Caco-2 (cell line): ENCODE measurements at regions of chr10 and their contacts with region 1.

Region 1: DNA sequence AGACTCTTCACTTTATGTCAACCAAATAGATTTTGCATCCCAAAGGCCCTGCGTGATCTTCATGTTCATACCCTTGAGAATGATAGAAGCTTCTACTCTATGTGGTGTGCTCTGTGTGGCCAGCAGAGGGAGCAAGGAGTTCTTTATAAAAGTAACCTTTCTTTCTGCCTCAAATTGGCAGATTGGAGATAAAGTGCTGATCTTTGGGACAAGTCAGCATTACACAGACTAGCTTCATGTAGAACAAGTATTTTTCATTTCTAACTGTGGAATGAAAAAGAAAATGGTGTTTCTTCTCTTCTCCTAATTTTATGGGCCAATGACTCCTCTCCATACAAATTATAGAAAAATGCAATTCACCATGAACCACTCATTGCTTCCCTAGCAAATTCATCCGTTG is 1214.1 kb downstream of the SORCS1 start:
- DNase-seq: peak; percentile 42 to 44
- H3K4me3 ChIP-seq: no peak overlapping the region
- H3K4me3 Mint-ChIP-seq: no peak overlapping the region
- H3K27ac Mint-ChIP-seq: no peak overlapping the region
- H3K4me1 ChIP-seq: no peaks in the 10 kb centered on the region
- H3K4me1 Mint-ChIP-seq: no peaks in the 10 kb centered on the region
- H3K27me3 ChIP-seq: no peaks in the 10 kb centered on the region
- H3K27me3 Mint-ChIP-seq: no peaks in the 10 kb centered on the region
- CTCF ChIP-seq: peak; percentile 62 to 83

Region 2: GRCh38 chr10:105797234-105797890 is 153.0 kb before region 1 on chr10:
- CTCF ChIA-PET with region 1: no interaction called
- POLR2A ChIA-PET with region 1: no interaction called
- intact Hi-C with region 1: loop called (anchors 1 kb)
- DNase-seq: peak in 1 of 2 experiments; percentile 28
- H3K4me3 ChIP-seq: no peak overlapping the region
- H3K4me3 Mint-ChIP-seq: no peak overlapping the region
- H3K27ac Mint-ChIP-seq: no peak overlapping the region
- H3K4me1 ChIP-seq: no peaks in the 10 kb centered on the region
- H3K4me1 Mint-ChIP-seq: no peaks in the 10 kb centered on the region
- H3K27me3 ChIP-seq: no peaks in the 10 kb centered on the region
- H3K27me3 Mint-ChIP-seq: no peaks in the 10 kb centered on the region
- CTCF ChIP-seq: peak; percentile 51

Region 3: DNA sequence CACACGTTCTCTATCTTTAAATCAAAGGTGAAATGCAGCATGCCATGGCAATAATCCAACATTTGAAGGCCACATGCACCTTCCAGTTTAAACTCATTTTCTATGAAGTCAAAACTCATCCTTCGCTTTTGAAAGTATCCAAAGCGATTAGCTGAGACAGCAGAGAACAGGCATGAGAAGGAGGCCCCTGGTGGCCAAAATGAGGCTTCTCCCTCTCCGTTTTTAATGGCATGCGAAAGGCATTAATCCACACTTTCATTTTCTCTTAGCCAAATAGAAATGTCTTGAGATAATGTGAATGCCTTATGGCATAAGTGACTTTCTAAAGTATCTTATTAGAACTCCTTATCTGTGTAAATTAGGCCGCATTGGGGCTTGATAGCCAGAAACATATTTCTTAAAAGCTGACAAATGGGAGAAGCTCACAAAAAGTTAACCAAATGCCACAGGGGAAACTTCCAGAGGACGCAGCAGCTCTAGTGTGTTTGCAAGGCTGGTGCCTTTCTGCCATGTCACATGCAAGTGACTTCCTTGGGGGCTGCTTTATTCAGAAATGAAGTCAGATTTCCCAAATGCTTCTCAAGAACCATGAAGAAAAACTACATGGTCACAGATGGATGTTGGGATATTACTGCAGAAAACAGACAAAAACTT is 24.5 kb after region 1 on chr10:
- CTCF ChIA-PET with region 1: interaction called, 5 read pairs
- POLR2A ChIA-PET with region 1: no interaction called
- intact Hi-C with region 1: loop called (anchors 2 kb)
- DNase-seq: peak in 1 of 2 experiments; percentile 25
- H3K4me3 ChIP-seq: no peak overlapping the region
- H3K4me3 Mint-ChIP-seq: no peak overlapping the region
- H3K27ac Mint-ChIP-seq: no peak overlapping the region
- H3K4me1 ChIP-seq: no peaks in the 10 kb centered on the region
- H3K4me1 Mint-ChIP-seq: no peaks in the 10 kb centered on the region
- H3K27me3 ChIP-seq: no peaks in the 10 kb centered on the region
- H3K27me3 Mint-ChIP-seq: peaks cover 2% of the 10 kb centered on the region
- CTCF ChIP-seq: peak; percentile 46 to 72

Region 4: GRCh38 chr10:106000721-106001120 is 50.3 kb after region 1 on chr10:
- CTCF ChIA-PET with region 1: no interaction called
- POLR2A ChIA-PET with region 1: no interaction called
- intact Hi-C with region 1: no loop called
- DNase-seq: no peak
- H3K4me3 ChIP-seq: no peak overlapping the region
- H3K4me3 Mint-ChIP-seq: no peak overlapping the region
- H3K27ac Mint-ChIP-seq: no peak overlapping the region
- H3K4me1 ChIP-seq: no peaks in the 10 kb centered on the region
- H3K4me1 Mint-ChIP-seq: no peaks in the 10 kb centered on the region
- H3K27me3 ChIP-seq: no peaks in the 10 kb centered on the region
- H3K27me3 Mint-ChIP-seq: peaks cover 8% of the 10 kb centered on the region
- CTCF ChIP-seq: no peak

Region 5: DNA sequence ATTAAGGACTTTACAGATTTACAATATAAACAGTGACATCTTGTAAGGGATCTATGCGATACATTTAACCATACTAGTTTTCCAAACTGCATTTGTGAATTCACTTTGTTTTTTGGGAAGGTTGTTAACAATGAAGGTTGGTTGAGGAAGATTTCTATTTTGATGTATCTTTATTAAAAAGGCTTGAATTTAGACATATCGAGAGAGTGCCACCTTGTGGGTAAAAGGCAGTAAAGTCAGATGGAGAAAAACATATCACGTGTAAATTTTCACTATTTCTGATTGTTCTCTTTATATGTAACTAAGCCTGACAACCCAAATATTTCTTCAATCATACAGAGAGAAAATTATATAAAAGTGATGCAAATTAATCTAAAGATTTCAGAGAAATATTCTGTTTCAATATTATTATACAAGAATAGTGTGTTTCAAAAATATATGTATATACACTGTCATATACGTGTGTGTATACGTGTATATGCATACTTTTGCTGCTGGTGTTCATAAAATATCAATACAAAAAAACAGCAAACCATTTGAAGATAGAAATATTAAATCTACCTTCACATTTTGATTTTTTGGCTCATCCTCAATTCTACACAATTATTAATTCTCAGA is 225.5 kb after region 1 on chr10:
- CTCF ChIA-PET with region 1: no interaction called
- POLR2A ChIA-PET with region 1: no interaction called
- intact Hi-C with region 1: loop called (anchors 1 kb)
- DNase-seq: peak in 1 of 2 experiments; percentile 2
- H3K4me3 ChIP-seq: no peak overlapping the region
- H3K4me3 Mint-ChIP-seq: no peak overlapping the region
- H3K27ac Mint-ChIP-seq: no peak overlapping the region
- H3K4me1 ChIP-seq: no peaks in the 10 kb centered on the region
- H3K4me1 Mint-ChIP-seq: no peaks in the 10 kb centered on the region
- H3K27me3 ChIP-seq: no peaks in the 10 kb centered on the region
- H3K27me3 Mint-ChIP-seq: peaks cover 2% of the 10 kb centered on the region
- CTCF ChIP-seq: peak in 1 of 2 experiments; percentile 38

Region 6: GRCh38 chr10:106189292-106189691 is 238.9 kb after region 1 on chr10:
- CTCF ChIA-PET with region 1: no interaction called
- POLR2A ChIA-PET with region 1: no interaction called
- intact Hi-C with region 1: loop called (anchors 1 kb)
- DNase-seq: peak; percentile 41 to 44
- H3K4me3 ChIP-seq: no peak overlapping the region
- H3K4me3 Mint-ChIP-seq: no peak overlapping the region
- H3K27ac Mint-ChIP-seq: no peak overlapping the region
- H3K4me1 ChIP-seq: no peaks in the 10 kb centered on the region
- H3K4me1 Mint-ChIP-seq: no peaks in the 10 kb centered on the region
- H3K27me3 ChIP-seq: no peaks in the 10 kb centered on the region
- H3K27me3 Mint-ChIP-seq: peaks cover 8% of the 10 kb centered on the region
- CTCF ChIP-seq: peak; percentile 50 to 54

Region 7: DNA sequence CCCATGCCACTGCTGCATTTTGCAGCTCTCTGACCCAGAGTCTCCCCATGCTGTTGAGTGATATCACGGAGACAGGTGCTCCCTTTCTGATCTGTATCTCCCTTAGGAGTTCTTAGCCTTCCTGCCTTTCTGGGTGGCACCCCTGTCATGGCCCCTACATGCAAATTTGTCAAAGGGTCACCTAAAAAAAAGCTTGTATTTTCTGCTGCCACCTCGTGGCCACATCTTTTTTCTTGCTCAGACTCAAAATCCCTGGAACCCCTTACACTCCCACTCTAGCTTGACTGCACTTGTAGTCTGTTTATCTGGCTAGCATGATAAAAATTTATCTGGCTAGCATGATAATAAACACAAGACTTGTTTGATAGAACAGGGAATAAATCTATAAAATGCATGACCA is 405.0 kb after region 1 on chr10:
- CTCF ChIA-PET with region 1: no interaction called
- POLR2A ChIA-PET with region 1: no interaction called
- intact Hi-C with region 1: loop called (anchors 1 kb)
- DNase-seq: peak in 1 of 2 experiments; percentile 4
- H3K4me3 ChIP-seq: no peak overlapping the region
- H3K4me3 Mint-ChIP-seq: no peak overlapping the region
- H3K27ac Mint-ChIP-seq: no peak overlapping the region
- H3K4me1 ChIP-seq: no peaks in the 10 kb centered on the region
- H3K4me1 Mint-ChIP-seq: no peaks in the 10 kb centered on the region
- H3K27me3 ChIP-seq: no peaks in the 10 kb centered on the region
- H3K27me3 Mint-ChIP-seq: peaks cover 8% of the 10 kb centered on the region
- CTCF ChIP-seq: peak; percentile 2 to 21

Region 8: DNA sequence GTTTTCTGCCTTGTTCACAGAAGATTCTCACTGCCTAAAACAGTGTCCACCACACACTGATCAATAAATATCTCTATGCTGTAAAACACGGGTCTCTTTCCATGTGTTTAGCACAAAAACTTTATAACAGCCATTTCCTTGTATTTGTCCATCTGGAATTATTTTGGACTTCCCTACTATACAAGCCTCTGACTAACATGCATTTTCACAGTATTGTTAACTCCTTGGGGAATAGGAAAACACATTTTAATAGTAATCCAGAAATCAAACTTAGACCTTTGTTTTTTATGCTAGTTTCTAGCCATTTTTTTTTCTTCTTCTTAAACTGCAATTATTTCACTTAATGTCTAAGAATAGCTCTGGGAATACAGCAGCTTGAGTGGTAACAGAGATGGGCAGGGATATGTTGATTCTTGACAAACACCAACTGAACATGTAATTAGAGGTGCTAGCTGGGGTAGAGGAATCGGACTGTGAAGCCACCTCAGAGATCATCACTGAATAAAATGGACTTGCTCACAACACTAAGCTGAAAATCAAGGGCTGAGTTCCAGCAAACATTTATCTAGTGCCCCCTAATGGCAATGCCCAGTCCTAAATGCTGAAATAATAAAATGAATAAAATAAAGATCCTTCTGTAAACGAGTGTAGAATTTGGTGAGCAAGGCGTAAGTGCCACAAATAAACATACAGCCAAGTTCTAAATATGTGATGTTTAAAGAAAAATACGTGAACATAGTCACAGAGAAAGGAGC is 621.0 kb after region 1 on chr10:
- CTCF ChIA-PET with region 1: no interaction called
- POLR2A ChIA-PET with region 1: no interaction called
- intact Hi-C with region 1: loop called (anchors 2 kb)
- DNase-seq: peak in 1 of 2 experiments; percentile 3
- H3K4me3 ChIP-seq: no peak overlapping the region
- H3K4me3 Mint-ChIP-seq: no peak overlapping the region
- H3K27ac Mint-ChIP-seq: no peak overlapping the region
- H3K4me1 ChIP-seq: no peaks in the 10 kb centered on the region
- H3K4me1 Mint-ChIP-seq: no peaks in the 10 kb centered on the region
- H3K27me3 ChIP-seq: no peaks in the 10 kb centered on the region
- H3K27me3 Mint-ChIP-seq: peaks cover 3% of the 10 kb centered on the region
- CTCF ChIP-seq: peak in 1 of 2 experiments; percentile 18